CD4-positive, alpha-beta T cell (primary cell): ENCODE measurements at regions of chr4 and their contacts with region 1.

Region 1: GRCh38 chr4:88514557-88515511 is 8.7 kb downstream of the PYURF start:
- DNase-seq: no peak
- ATAC-seq: no peak
- H3K4me3 ChIP-seq: no peak overlapping the region
- H3K4me3 Mint-ChIP-seq: no peak overlapping the region
- H3K27ac ChIP-seq: no peak overlapping the region
- H3K27ac Mint-ChIP-seq: no peak overlapping the region
- H3K4me1 ChIP-seq: peaks cover 3% of the 10 kb centered on the region
- H3K4me1 Mint-ChIP-seq: no peaks in the 10 kb centered on the region
- H3K27me3 ChIP-seq: no peaks in the 10 kb centered on the region
- H3K27me3 Mint-ChIP-seq: no peaks in the 10 kb centered on the region
- CTCF ChIP-seq: no peak

Region 2: DNA sequence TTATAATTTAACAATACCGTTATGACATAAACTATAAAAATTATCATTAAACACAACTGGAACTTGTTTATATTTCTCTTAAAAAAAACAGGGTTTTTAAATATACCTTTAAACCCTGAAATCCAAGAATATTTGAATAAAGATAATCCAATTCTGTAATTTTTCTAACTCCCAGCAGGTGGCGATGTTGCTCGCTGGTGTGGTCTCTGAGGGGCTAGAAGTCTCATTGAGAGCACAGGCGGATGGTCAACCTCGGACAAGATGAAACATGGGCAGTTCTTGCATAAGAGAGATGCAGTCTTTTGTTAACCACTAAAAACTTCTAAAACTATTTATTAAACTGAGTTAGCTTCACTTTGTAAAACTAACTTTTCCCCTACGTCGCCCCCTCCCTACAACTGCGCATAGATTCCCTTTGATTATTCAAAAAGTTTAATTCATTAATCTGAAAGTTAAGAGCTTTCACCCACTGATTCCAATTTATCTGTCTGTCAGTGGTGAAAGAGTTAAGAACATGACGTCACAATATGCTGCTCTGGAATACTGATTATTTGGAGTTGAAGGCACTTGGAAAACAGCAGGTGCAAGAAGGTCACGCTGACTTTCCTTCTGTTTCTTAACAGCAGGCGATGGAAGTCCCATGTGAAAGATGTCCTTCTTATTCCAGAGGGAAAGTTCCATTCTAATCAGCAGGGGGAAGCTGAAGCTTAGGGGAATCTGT is 835.2 kb before region 1 on chr4:
- CTCF ChIA-PET with region 1: no interaction called
- POLR2A ChIA-PET with region 1: no interaction called
- intact Hi-C with region 1: loop called in 1 of 2 experiments (anchors 5 kb)
- DNase-seq: peak in 8 of 14 experiments; percentile 2 to 57 (median 16)
- ATAC-seq: no peak
- H3K4me3 ChIP-seq: no peak overlapping the region
- H3K4me3 Mint-ChIP-seq: no peak overlapping the region
- H3K27ac ChIP-seq: no peak overlapping the region
- H3K27ac Mint-ChIP-seq: no peak overlapping the region
- H3K4me1 ChIP-seq: no peaks in the 10 kb centered on the region
- H3K4me1 Mint-ChIP-seq: no peaks in the 10 kb centered on the region
- H3K27me3 ChIP-seq: no peaks in the 10 kb centered on the region
- H3K27me3 Mint-ChIP-seq: peaks cover 10% of the 10 kb centered on the region
- CTCF ChIP-seq: peak; percentile 69

Region 3: DNA sequence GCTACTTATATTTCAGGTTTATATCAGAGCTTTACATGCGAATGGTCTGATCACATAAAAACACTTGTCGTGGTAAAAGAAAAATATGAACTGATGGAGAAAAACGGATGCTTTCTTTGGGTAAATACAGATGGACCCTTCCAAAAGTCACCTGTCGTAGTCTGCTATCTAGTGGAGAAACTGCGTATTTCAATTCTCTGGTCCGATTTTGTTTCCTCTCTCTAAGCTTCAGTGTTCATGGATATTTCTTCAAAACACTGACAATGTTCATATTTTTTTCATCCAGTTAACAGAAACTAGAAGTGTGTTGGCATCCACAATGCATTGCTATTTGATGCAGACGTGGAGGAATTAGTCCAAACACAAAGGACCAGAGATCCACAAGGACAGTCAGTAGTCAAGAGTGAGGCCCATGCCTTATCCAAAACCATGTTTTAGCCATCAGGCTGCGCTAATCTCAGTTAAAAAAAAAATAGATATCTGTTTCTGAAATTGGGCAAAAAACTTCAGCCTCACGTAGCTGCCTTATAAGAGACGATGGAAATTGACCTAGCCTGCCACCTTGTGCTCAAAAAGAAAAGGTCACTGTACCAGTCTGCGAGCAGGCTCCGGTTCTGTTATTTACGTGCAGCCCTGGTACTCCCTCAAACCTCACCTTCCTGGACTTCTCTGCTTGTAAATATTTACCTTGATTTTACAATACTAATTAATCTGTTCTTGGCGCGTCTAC is 666.0 kb before region 1 on chr4:
- CTCF ChIA-PET with region 1: no interaction called
- POLR2A ChIA-PET with region 1: no interaction called
- intact Hi-C with region 1: loop called in 1 of 2 experiments (anchors 10 kb)
- DNase-seq: peak in 7 of 14 experiments; percentile 2 to 62 (median 27)
- ATAC-seq: peak; percentile 75
- H3K4me3 ChIP-seq: peak overlapping the region; percentile 24
- H3K4me3 Mint-ChIP-seq: peak overlapping the region; percentile 17
- H3K27ac ChIP-seq: no peak overlapping the region
- H3K27ac Mint-ChIP-seq: no peak overlapping the region
- H3K4me1 ChIP-seq: no peaks in the 10 kb centered on the region
- H3K4me1 Mint-ChIP-seq: peaks cover 18% of the 10 kb centered on the region
- H3K27me3 ChIP-seq: peaks cover 0 to 11% of the 10 kb centered on the region in 2 experiments
- H3K27me3 Mint-ChIP-seq: peaks cover 15% of the 10 kb centered on the region
- CTCF ChIP-seq: peak; percentile 66

Region 4: DNA sequence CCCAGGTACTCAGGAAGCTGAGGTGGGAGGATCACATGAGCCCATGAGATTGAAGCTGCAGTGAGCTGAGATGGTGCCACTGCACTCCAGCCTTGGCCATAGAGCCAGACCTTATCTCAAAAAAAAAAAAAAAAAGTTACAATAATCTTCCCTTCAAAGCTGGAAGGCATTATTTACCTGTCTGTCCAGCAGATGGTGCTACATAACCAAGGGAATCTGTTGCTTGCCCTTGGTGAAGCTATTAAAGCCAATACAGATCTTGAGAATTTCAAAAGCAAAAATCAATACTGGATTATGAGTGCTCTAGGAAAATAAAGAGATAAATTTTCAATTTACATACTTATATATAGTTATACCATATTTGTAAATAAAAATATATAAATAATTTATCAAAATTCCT is 481.5 kb before region 1 on chr4:
- CTCF ChIA-PET with region 1: interaction called, 4 read pairs
- POLR2A ChIA-PET with region 1: no interaction called
- intact Hi-C with region 1: loop called (anchors 1 to 5 kb)
- DNase-seq: peak in 9 of 14 experiments; percentile 5 to 74 (median 13)
- ATAC-seq: peak; percentile 64
- H3K4me3 ChIP-seq: no peak overlapping the region
- H3K4me3 Mint-ChIP-seq: no peak overlapping the region
- H3K27ac ChIP-seq: no peak overlapping the region
- H3K27ac Mint-ChIP-seq: no peak overlapping the region
- H3K4me1 ChIP-seq: no peaks in the 10 kb centered on the region
- H3K4me1 Mint-ChIP-seq: no peaks in the 10 kb centered on the region
- H3K27me3 ChIP-seq: no peaks in the 10 kb centered on the region
- H3K27me3 Mint-ChIP-seq: no peaks in the 10 kb centered on the region
- CTCF ChIP-seq: peak; percentile 67

Region 5: DNA sequence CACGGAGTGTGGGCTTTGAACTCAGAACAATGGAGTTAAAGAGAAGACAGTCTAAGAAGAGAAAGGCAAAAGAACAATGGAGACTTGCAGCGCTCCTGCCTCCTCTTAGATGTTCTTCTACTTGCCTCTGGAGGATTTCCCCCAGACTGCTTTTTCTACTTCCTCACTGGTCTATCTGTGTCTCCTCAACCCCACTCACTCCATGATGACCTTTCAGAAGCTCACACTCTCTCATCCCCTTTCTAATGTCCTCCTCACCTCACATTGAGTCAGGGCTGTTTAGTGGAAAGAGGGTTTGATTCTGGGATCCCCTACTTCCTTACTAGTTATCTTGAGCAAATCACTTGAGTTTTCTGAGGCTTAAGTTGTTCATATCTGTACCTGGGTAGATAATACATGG is 148.4 kb before region 1 on chr4:
- CTCF ChIA-PET with region 1: interaction called, 3 read pairs
- POLR2A ChIA-PET with region 1: no interaction called
- intact Hi-C with region 1: loop called (anchors 1 to 10 kb)
- DNase-seq: no peak
- ATAC-seq: no peak
- H3K4me3 ChIP-seq: no peak overlapping the region
- H3K4me3 Mint-ChIP-seq: no peak overlapping the region
- H3K27ac ChIP-seq: no peak overlapping the region
- H3K27ac Mint-ChIP-seq: no peak overlapping the region
- H3K4me1 ChIP-seq: no peaks in the 10 kb centered on the region
- H3K4me1 Mint-ChIP-seq: no peaks in the 10 kb centered on the region
- H3K27me3 ChIP-seq: no peaks in the 10 kb centered on the region
- H3K27me3 Mint-ChIP-seq: no peaks in the 10 kb centered on the region
- CTCF ChIP-seq: no peak

Region 6: GRCh38 chr4:89619206-89619962 is 1104.5 kb after region 1 on chr4:
- CTCF ChIA-PET with region 1: no interaction called
- POLR2A ChIA-PET with region 1: no interaction called
- intact Hi-C with region 1: no loop called
- DNase-seq: peak in 1 of 14 experiments; percentile 23
- ATAC-seq: no peak
- H3K4me3 ChIP-seq: no peak overlapping the region
- H3K4me3 Mint-ChIP-seq: no peak overlapping the region
- H3K27ac ChIP-seq: peak overlapping the region in 1 of 2 donors; percentile 23
- H3K27ac Mint-ChIP-seq: no peak overlapping the region
- H3K4me1 ChIP-seq: no peaks in the 10 kb centered on the region
- H3K4me1 Mint-ChIP-seq: peaks cover 16% of the 10 kb centered on the region
- H3K27me3 ChIP-seq: no peaks in the 10 kb centered on the region
- H3K27me3 Mint-ChIP-seq: no peaks in the 10 kb centered on the region
- CTCF ChIP-seq: no peak